ENCODE measurements at regions of chr18 and their contacts with region 1.

Region 1: DNA sequence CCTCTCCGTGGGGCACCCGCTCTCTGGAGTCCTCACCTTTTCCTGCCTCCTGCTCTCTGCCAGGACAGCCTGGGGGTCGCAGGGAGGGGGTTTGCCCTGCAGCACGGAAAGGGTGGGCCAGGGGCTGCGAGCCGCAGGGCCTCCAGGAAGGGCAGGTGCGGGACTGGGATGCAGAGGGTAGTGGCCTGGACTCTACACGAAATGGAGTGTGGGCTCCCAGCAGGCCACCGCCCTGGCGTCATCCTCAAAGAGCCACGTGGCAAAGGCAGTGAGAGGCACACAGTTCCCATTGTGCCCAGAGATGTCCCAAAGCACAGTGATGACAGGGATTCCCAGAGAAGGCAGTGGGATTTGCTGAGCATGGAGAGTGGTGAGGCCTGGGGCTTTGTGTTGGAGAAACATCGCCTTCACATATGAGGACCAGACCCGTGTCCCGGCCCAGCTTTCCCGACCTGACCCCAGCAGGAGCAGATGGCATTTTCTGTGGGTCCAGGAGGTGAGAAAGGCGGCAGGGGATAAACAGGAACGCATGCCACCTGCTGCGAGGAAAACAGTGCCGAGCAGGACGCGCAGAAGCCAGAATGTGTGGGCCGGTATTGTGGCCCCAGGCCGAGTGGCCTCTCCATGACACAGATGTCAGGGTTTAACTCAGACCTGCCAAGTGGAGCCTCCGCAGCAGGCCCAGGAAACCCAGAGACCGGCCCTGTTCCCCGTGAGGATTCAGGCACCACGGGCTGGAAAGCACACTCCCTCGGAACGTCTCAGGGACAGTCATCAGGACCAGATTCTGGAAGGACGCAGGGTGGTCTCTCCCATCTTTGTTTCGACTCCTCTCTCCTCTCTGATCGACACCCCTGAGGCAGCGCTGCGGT is 855.5 kb upstream of the SALL3 start:
- DNase-seq: no peak
- H3K4me3 ChIP-seq: no peak overlapping the region
- H3K27ac ChIP-seq: no peak overlapping the region
- H3K4me1 ChIP-seq: no peaks in the 10 kb centered on the region
- H3K27me3 ChIP-seq: no peaks in the 10 kb centered on the region
- CTCF ChIP-seq: no peak
- POLR2A ChIP-seq: no peak

Region 2: GRCh38 chr18:78171954-78172353 is 47.8 kb after region 1 on chr18:
- intact Hi-C with region 1: loop called in 1 of 2 experiments (anchors 2 kb)
- DNase-seq: no peak
- H3K4me3 ChIP-seq: no peak overlapping the region
- H3K27ac ChIP-seq: no peak overlapping the region
- H3K4me1 ChIP-seq: no peaks in the 10 kb centered on the region
- H3K27me3 ChIP-seq: no peaks in the 10 kb centered on the region
- CTCF ChIP-seq: no peak
- POLR2A ChIP-seq: no peak